Cardiac septum (tissue), 1 donor: ENCODE measurements at regions of chr6 and their contacts with region 1.

Region 1: DNA sequence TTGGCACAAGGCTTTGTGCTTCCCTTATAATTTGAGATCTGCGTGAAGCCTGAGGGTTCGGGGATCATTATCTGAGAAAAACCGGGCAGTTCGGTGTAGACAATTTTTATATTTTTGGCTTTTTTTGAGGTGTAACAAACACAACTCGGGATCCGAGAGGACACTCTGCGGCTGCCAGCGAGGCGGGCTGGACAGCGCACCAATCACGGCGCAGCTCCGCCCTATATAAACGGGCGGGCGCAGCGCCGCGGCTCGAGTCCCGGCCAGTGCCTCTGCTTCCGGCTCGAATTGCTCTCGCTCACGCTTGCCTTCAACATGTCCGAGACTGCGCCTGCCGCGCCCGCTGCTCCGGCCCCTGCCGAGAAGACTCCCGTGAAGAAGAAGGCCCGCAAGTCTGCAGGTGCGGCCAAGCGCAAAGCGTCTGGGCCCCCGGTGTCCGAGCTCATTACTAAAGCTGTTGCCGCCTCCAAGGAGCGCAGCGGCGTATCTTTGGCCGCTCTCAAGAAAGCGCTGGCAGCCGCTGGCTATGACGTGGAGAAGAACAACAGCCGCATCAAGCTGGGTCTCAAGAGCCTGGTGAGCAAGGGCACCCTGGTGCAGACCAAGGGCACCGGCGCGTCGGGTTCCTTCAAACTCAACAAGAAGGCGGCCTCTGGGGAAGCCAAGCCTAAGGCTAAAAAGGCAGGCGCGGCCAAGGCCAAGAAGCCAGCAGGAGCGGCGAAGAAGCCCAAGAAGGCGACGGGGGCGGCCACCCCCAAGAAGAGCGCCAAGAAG is 69.0 kb downstream of the HFE start:
- DNase-seq: peak; percentile 97

Region 2: GRCh38 chr6:25842526-25843277 is 313.6 kb before region 1 on chr6:
- intact Hi-C with region 1: no loop called
- DNase-seq: no peak

Region 3: DNA sequence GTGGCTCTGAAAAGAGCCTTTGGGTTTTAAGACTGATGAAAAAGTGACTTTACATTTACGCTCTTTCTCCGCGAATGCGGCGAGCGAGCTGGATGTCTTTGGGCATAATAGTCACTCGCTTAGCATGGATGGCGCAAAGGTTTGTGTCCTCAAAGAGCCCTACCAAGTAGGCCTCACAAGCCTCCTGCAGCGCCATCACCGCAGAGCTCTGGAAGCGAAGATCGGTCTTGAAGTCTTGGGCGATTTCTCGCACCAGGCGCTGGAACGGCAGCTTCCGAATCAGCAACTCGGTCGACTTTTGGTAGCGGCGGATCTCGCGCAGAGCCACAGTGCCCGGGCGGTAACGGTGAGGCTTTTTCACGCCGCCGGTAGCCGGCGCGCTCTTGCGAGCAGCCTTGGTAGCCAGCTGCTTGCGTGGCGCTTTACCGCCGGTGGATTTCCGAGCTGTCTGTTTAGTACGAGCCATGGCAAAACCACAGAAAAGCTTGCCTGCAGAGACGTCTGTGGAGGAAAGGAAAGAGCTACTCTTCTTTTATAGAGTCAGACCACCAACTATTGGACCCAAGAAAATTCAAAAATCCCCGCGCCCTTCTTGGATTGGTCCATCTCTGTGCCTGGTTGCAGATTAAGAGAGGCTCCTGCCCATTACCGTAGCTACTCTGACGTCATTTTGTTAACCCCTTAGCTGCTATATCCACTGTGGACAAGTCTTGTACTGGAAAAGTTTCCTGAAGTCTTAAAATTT is 124.5 kb before region 1 on chr6:
- intact Hi-C with region 1: loop called (anchors 2 kb)
- DNase-seq: peak; percentile 86

Region 4: GRCh38 chr6:26122793-26123674 is 33.2 kb before region 1 on chr6:
- intact Hi-C with region 1: loop called (anchors 1 kb)
- DNase-seq: peak; percentile 94

Region 5: DNA sequence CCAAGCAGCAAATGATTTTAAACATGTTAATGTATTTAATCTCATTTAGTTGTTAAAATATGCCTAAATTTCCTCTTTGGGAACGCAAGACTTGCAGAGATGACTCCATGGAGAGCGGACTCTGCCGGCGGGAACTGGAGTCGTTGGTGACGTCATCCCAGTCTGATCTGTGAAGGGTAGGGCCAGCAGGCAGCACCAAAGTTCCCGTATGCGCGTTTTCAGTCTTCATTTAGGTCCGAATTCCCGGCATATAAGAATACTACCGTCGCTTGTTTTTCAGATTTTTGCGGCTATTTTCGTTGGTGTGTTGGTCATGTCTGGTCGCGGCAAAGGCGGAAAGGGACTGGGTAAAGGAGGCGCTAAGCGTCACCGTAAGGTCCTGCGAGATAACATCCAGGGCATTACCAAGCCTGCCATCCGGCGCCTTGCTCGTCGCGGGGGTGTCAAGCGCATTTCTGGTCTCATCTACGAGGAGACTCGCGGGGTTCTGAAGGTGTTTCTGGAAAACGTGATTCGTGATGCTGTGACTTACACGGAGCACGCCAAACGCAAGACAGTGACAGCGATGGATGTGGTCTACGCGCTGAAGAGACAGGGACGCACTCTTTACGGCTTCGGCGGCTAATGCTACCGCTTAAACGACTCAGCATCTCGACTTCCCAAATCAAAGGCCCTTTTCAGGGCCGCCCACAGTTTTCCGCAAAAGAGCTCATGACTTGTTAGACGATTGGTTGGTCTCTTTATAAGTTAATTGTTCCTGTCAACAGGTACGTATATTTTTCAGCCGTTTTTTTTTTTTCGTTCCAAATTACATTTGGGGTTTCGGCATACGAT is 48.3 kb after region 1 on chr6:
- intact Hi-C with region 1: loop called (anchors 2 kb)
- DNase-seq: peak; percentile 96

Region 6: DNA sequence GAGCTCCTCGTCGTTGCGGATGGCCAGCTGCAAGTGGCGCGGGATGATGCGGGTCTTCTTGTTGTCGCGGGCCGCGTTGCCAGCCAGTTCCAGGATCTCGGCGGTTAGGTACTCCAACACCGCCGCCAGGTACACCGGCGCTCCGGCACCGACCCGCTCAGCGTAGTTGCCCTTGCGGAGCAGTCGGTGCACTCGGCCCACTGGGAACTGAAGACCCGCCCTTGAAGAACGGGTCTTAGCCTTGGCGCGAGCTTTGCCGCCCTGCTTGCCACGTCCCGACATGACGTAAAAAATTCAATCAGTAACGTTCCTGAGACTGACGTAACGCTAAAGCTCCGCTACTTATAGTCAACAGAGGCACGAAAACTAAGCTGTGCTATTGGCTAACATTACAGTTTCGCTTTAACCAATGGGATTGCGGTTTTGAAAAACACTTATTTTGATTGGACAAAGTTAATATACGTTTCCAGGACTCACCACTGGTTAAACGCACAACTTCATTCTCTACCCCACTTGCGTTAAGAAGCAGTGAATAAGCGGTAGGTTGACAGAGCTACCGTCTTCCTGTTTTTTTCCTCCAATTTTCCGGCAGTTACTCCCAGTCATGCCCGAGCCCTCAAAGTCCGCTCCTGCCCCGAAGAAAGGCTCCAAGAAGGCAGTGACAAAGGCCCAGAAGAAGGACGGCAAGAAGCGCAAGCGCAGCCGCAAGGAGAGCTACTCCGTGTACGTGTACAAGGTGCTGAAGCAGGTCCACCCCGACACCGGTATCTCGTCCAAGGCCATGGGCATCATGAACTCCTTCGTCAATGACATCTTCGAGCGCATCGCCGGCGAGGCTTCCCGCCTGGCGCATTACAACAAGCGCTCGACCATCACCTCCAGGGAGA is 1682.0 kb after region 1 on chr6:
- intact Hi-C with region 1: loop called (anchors 5 kb)
- DNase-seq: peak; percentile 88